Naive thymus-derived CD4-positive, alpha-beta T cell (primary cell): ENCODE measurements at regions of chr18 and their contacts with region 1.

Region 1: DNA sequence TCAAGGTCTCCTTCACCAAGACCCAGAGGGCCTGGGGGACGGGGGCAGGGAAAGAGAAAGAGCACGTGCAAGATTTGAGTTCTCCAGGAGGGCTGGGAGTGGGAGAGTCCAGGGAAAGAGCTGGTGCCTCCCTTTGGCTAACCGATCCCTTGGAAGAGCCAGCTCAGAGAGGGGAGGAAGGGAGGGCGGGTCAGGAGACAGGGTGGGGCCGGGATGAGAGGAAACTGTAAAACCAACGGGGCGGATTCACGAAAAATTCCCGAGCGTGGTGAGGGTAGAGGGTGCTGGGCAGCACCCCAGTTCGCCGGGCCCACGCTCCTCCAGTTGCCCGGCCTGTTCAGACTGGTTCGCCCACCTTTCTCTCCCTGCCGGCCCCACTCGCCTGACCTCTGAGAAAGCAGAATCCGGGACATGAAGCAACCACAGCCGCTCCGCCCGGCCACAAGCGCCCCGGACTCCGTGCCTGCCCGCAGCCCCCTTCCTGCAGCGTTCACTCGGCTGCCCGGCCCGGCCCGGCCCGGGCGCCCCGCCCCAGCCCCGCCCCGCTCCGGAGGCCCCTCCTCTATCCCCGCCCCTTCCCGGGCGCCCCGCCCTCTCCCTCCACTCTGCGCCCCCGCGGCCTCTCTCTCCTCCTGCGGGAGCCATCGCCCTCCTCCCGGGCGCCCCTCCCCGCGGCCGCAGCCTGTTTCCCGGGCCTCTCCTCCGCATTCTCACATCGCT is 230.9 kb upstream of the SMAD2 start:
- DNase-seq: peak; percentile 5 to 82 (median 34)
- ATAC-seq: peak; percentile 94
- H3K4me3 ChIP-seq: peak overlapping the region; percentile 9
- H3K4me3 Mint-ChIP-seq: peak overlapping the region; percentile 32 to 75 (median 70)
- H3K27ac ChIP-seq: no peak overlapping the region
- H3K27ac Mint-ChIP-seq: peak overlapping the region in 1 of 9 donors; percentile 49
- H3K4me1 ChIP-seq: no peaks in the 10 kb centered on the region
- H3K4me1 Mint-ChIP-seq: peaks cover 2 to 15% (median 10%) of the 10 kb centered on the region in 7 donors
- H3K27me3 ChIP-seq: no peaks in the 10 kb centered on the region
- H3K27me3 Mint-ChIP-seq: peaks cover 0 to 60% (median 16%) of the 10 kb centered on the region in 5 donors

Region 2: GRCh38 chr18:48300463-48300961 is 139.2 kb after region 1 on chr18:
- CTCF ChIA-PET with region 1: no interaction called
- POLR2A ChIA-PET with region 1: no interaction called
- intact Hi-C with region 1: loop called in 1 of 2 experiments (anchors 1 kb)
- DNase-seq: peak in 1 of 9 donors; percentile 31
- ATAC-seq: peak; percentile 31
- H3K4me3 ChIP-seq: no peak overlapping the region
- H3K4me3 Mint-ChIP-seq: peak overlapping the region in 1 of 10 donors; percentile 29
- H3K27ac ChIP-seq: no peak overlapping the region
- H3K27ac Mint-ChIP-seq: peak overlapping the region in 2 of 9 donors; percentile 34 to 48
- H3K4me1 ChIP-seq: no peaks in the 10 kb centered on the region
- H3K4me1 Mint-ChIP-seq: peaks cover 0 to 16% (median 5%) of the 10 kb centered on the region in 7 donors
- H3K27me3 ChIP-seq: no peaks in the 10 kb centered on the region
- H3K27me3 Mint-ChIP-seq: peaks cover 0 to 8% (median 0%) of the 10 kb centered on the region in 5 donors

Region 3: GRCh38 chr18:48410095-48410920 is 249.0 kb after region 1 on chr18:
- CTCF ChIA-PET with region 1: no interaction called
- POLR2A ChIA-PET with region 1: no interaction called
- intact Hi-C with region 1: loop called in 1 of 2 experiments (anchors 2 kb)
- DNase-seq: peak in 6 of 9 donors; percentile 9 to 87 (median 36)
- ATAC-seq: peak; percentile 91
- H3K4me3 ChIP-seq: peak overlapping the region; percentile 43
- H3K4me3 Mint-ChIP-seq: peak overlapping the region; percentile 50 to 84 (median 76)
- H3K27ac ChIP-seq: no peak overlapping the region
- H3K27ac Mint-ChIP-seq: no peak overlapping the region
- H3K4me1 ChIP-seq: peaks cover 0 to 6% of the 10 kb centered on the region in 2 donors
- H3K4me1 Mint-ChIP-seq: peaks cover 4 to 20% (median 14%) of the 10 kb centered on the region in 7 donors
- H3K27me3 ChIP-seq: peaks cover 4 to 5% of the 10 kb centered on the region in 2 donors
- H3K27me3 Mint-ChIP-seq: peaks cover 69 to 75% (median 71%) of the 10 kb centered on the region in 5 donors